ENCODE measurements at regions of chr19 and their contacts with region 1.

Region 1: GRCh38 chr19:5803752-5804515 is 933 bp upstream of the NRTN start:
- DNase-seq: peak; percentile 93 to 96 (median 94)
- H3K4me3 ChIP-seq: peak overlapping the region in 5 of 7 experiments; percentile 31 to 69 (median 53)
- H3K27ac ChIP-seq: no peak overlapping the region
- H3K4me1 ChIP-seq: peaks cover 0 to 56% (median 30%) of the 10 kb centered on the region in 4 experiments
- H3K27me3 ChIP-seq: peaks cover 0 to 21% (median 10%) of the 10 kb centered on the region in 5 experiments

Region 2: GRCh38 chr19:5827891-5828660 is 24.1 kb after region 1 on chr19:
- CTCF ChIA-PET with region 1: interaction called, 30 read pairs
- POLR2A ChIA-PET with region 1: interaction called, 13 read pairs
- DNase-seq: peak; percentile 93 to 96 (median 96)
- H3K4me3 ChIP-seq: peak overlapping the region; percentile 46 to 93 (median 74)
- H3K27ac ChIP-seq: peak overlapping the region; percentile 33 to 85
- H3K4me1 ChIP-seq: peaks cover 0 to 31% (median 29%) of the 10 kb centered on the region in 4 experiments
- H3K27me3 ChIP-seq: no peaks in the 10 kb centered on the region

Region 3: DNA sequence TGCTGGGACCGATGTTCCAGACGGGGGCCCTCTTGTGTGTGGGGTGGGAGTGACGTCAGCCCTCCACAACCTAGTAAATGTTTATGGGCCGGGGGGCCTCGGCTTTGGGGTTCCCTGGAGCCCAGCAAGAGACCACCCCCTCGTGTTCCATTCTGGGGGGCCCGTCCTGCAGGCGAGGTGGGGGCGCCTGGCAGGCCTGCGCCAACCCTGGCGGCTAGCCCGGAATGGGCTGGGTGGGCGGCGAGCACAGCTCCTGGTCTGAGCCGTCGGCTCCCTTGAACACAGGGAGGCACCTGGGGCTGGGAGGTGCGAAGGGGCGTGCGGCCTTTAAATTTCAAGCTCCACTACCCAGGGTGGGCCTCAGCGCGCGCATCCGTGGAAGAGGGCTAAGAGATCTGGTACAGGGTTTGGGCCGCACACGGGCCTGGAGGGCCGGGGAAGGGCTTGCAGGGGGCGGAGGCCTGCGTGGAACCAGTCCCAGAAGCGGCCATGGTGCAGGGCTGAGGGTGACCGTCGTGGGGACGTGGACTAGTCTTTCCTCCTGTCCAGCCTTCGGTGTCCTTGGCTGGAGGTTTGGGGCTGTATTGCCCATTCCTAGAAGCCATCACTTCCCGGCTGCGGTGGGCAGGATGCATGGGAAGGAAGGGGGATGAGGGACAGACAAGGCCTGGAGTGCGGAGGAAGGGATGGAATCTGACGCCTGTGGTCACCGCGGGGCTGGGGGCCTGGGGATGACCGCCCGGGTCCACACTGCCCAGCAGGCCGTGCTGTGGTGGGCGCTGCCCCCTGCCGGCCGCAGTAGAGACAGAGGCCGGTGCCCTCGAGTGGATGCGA is 88.2 kb after region 1 on chr19:
- CTCF ChIA-PET with region 1: interaction called, 35 read pairs
- POLR2A ChIA-PET with region 1: interaction called, 3 read pairs
- DNase-seq: peak in 2 of 3 donors; percentile 36 to 41
- H3K4me3 ChIP-seq: no peak overlapping the region
- H3K27ac ChIP-seq: no peak overlapping the region
- H3K4me1 ChIP-seq: peaks cover 0 to 32% (median 14%) of the 10 kb centered on the region in 4 experiments
- H3K27me3 ChIP-seq: peaks cover 0 to 33% (median 4%) of the 10 kb centered on the region in 5 experiments

Region 4: GRCh38 chr19:5904352-5905113 is 100.6 kb after region 1 on chr19 and contains the start of gene VMAC:
- CTCF ChIA-PET with region 1: interaction called, 17 read pairs
- POLR2A ChIA-PET with region 1: interaction called, 3 read pairs
- DNase-seq: peak; percentile 100
- H3K4me3 ChIP-seq: peak within 1 kb of the TSS; percentile 84 to 100 (median 97)
- H3K27ac ChIP-seq: peak within 1 kb of the TSS; percentile 94 to 97
- H3K4me1 ChIP-seq: peaks cover 0 to 25% (median 16%) of the 10 kb centered on the region in 4 experiments
- H3K27me3 ChIP-seq: no peaks in the 10 kb centered on the region

Region 5: DNA sequence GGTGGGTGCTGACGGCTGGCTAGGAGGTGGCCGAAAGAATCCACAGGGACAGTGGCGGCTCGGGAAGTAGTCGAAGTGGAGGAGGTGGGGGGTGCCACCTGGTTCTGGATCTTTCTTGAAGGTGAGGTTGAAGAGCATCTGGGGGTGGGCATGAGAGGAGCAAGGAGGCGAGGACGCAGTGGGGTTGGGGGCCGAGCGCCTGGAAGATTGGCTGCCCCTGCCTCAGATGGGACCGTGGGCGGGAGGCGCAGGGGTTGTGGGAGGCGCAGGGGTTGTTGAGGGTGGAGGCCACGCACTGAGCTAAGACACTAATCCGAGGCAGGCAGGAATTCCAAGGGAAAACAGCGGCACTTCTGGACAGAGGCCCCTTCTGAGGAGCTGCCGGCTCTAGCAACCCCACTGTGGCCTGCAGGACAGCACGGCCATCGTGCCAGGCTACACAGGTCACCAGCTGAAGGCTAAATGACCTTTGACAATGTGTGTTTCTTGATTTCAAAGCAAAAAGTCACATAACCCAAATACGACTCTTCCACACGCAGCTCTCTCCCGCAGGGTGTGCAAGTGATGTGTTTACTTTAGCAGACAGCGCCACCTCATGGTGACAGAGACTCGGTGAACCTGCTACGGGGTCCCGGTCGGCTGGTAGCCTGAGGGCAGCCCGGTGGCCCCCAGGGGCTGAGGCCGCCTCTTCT is 218.1 kb after region 1 on chr19:
- CTCF ChIA-PET with region 1: interaction called, 14 read pairs
- POLR2A ChIA-PET with region 1: no interaction called
- DNase-seq: peak; percentile 80 to 90 (median 86)
- H3K4me3 ChIP-seq: no peak overlapping the region
- H3K27ac ChIP-seq: no peak overlapping the region
- H3K4me1 ChIP-seq: peaks cover 0 to 5% (median 4%) of the 10 kb centered on the region in 4 experiments
- H3K27me3 ChIP-seq: no peaks in the 10 kb centered on the region